ENCODE measurements at regions of chr4 and their contacts with region 1.

Region 1: GRCh38 chr4:99808260-99808857 is 8.3 kb upstream of the DAPP1 start:
- DNase-seq: peak in 1 of 2 donors; percentile 79
- H3K4me3 ChIP-seq: no peak overlapping the region
- H3K27ac ChIP-seq: no peak overlapping the region
- H3K4me1 ChIP-seq: no peaks in the 10 kb centered on the region
- H3K27me3 ChIP-seq: no peaks in the 10 kb centered on the region
- CTCF ChIP-seq: peak; percentile 47 to 78 (median 58)

Region 2: DNA sequence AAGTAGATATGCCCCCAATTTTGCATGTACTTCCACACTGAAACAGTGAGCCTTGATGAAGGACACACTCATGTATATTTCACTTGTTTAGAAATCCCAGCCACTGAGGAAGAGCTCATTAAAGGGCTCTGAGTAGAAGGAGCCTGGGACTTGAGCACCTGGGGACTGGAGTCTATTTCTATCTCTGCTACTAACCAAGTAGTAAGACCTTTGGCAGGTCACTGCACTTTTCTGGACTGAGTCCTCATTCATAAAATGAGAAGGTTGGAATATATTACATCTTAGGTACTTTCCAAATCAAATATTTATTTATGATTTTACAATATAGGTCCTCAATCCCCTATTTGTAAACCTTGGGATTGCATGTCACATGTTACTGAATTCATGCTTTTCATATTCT is 72.5 kb before region 1 on chr4:
- intact Hi-C with region 1: no loop called
- DNase-seq: no peak
- H3K4me3 ChIP-seq: no peak overlapping the region
- H3K27ac ChIP-seq: no peak overlapping the region
- H3K4me1 ChIP-seq: no peaks in the 10 kb centered on the region
- H3K27me3 ChIP-seq: no peaks in the 10 kb centered on the region
- CTCF ChIP-seq: no peak

Region 3: DNA sequence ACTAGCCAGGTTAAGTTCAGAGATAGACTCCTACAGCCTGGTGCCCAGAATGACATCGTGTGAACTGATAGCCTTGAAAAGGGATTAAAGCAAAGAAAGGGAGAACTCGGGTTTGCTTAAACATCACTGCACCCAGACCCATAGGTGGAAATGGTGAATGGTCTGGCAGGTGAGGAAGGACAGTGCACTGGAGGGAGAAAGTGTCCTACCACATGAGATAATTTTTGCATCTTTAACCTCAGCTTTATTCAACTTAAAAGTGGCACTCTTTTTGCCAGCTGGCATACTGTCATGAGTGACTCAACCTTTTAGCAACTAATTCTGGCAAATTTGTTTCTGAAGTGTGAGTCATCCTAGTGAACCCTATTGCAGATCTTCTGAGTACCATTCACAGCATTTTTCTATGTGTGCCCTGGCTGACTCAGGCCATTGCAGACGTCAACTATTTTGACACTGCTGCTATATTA is 44.7 kb before region 1 on chr4:
- intact Hi-C with region 1: loop called (anchors 5 kb)
- DNase-seq: peak in 1 of 2 donors; percentile 83
- H3K4me3 ChIP-seq: no peak overlapping the region
- H3K27ac ChIP-seq: no peak overlapping the region
- H3K4me1 ChIP-seq: peaks cover 4 to 8% of the 10 kb centered on the region in 2 donors
- H3K27me3 ChIP-seq: no peaks in the 10 kb centered on the region
- CTCF ChIP-seq: no peak

Measured in ascending aorta (tissue), 2 donors.